H1 (cell line): ENCODE measurements at regions of chr12 and their contacts with region 1.

Region 1: GRCh38 chr12:50167041-50167828 is at the start of gene CERS5:
- DNase-seq: peak; percentile 97
- H3K4me3 ChIP-seq: peak within 1 kb of the TSS; percentile 51 to 91 (median 82)
- H3K27ac ChIP-seq: peak within 1 kb of the TSS; percentile 74
- H3K4me1 ChIP-seq: peaks cover 0 to 2% (median 0%) of the 10 kb centered on the region in 4 experiments; a peak in 2 of 7 replicates
- H3K27me3 ChIP-seq: no peaks in the 10 kb centered on the region
- CTCF ChIP-seq: no peak; a peak in 1 of 4 replicates
- EP300 ChIP-seq: no peak
- POLR2A ChIP-seq: peak; percentile 62 to 88
- RAD21 ChIP-seq: no peak
- total RNA-seq, gene CERS5: 58.5 and 69.2 TPM in 2 replicates

Region 2: DNA sequence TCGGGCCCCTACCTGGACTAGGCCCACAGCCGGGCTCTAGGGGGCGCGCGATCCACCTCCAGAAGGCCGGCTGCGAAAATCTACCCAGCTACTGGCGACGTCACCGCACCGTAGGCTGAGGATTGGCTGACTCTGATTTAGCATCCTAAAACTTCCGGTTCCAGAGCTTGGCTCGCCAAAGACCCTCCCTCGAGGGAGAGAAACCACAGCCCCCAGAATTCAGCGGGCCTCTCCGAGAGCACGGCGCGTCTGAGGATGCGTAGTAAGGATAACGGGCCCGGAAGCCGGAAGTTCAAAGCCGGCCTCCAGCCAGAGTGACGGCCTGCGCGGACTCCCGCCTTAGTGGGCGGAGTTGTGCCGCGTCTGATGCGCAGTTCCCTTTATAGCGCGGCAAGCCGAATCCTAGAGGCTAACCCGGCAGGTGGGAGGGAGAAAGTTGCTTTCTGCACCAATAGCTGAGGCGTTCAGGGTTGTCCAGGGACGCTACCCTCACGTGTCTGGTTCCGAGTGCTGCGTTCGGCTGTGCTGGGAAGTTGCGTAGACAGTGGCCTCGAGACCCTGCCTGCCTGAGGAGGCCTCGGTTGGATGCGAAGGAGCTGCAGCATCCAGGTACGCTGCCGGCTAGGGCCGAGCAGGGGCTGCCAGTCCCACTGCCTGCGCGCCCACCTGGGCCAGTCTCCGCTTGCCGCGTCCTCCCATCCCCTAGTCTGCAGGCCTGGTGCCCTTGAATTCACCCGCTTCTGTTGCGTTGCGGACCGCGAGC is 55.4 kb before region 1 on chr12 and contains the start of gene COX14:
- CTCF ChIA-PET with region 1: interaction called, 135 read pairs
- POLR2A ChIA-PET with region 1: interaction called, 33 read pairs
- DNase-seq: peak; percentile 99 to 100
- H3K4me3 ChIP-seq: peak within 1 kb of the TSS; percentile 67 to 96 (median 88)
- H3K27ac ChIP-seq: peak within 1 kb of the TSS; percentile 74
- H3K4me1 ChIP-seq: peaks cover 10 to 15% (median 12%) of the 10 kb centered on the region in 4 experiments
- H3K27me3 ChIP-seq: no peaks in the 10 kb centered on the region
- CTCF ChIP-seq: peak; percentile 81 to 93 (median 81)
- EP300 ChIP-seq: 0 out of 3 replicates have a peak, but pooled peaks of 1 of the 2 experiments have one; percentile 37
- POLR2A ChIP-seq: peak in 1 of 2 experiments; percentile 93; a peak in 2 of 3 replicates
- RAD21 ChIP-seq: peak; percentile 52 to 55
- total RNA-seq, gene COX14: 38.5 and 40.1 TPM in 2 replicates

Region 3: GRCh38 chr12:50132505-50133135 is 34.6 kb before region 1 on chr12:
- CTCF ChIA-PET with region 1: interaction called, 10 read pairs
- POLR2A ChIA-PET with region 1: interaction called, 15 read pairs
- DNase-seq: no peak
- H3K4me3 ChIP-seq: no peak overlapping the region
- H3K27ac ChIP-seq: no peak overlapping the region
- H3K4me1 ChIP-seq: no peaks in the 10 kb centered on the region
- H3K27me3 ChIP-seq: no peaks in the 10 kb centered on the region
- CTCF ChIP-seq: peak in 2 of 3 experiments; percentile 33 to 38; a peak in 2 of 4 replicates
- EP300 ChIP-seq: no peak
- POLR2A ChIP-seq: no peak
- RAD21 ChIP-seq: peak; percentile 49 to 56; a peak in 3 of 4 replicates

Region 4: DNA sequence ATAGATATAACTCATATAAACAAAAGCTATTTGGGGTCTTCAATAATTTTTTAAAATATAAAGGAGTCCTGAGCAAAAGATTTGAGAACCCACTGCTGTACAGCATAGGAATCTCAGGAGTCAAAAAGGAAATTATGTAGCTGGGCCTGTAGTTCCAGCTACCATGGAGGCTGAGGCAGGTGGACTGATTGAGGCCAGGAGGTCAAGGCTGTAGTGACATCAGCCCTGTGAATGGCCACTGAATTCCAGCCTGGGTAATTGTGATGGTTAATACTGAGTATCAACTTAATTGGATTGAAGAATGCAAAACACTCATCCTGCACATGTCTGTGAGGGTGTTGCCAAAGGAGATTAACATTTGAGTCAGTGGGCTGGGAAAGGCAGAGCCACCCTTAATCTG is 10.6 kb before region 1 on chr12:
- CTCF ChIA-PET with region 1: interaction called, 5 read pairs
- POLR2A ChIA-PET with region 1: interaction called, 20 read pairs
- DNase-seq: no peak
- H3K4me3 ChIP-seq: no peak overlapping the region
- H3K27ac ChIP-seq: no peak overlapping the region
- H3K4me1 ChIP-seq: no peaks in the 10 kb centered on the region
- H3K27me3 ChIP-seq: no peaks in the 10 kb centered on the region
- CTCF ChIP-seq: no peak
- EP300 ChIP-seq: no peak
- POLR2A ChIP-seq: no peak
- RAD21 ChIP-seq: no peak

Region 5: DNA sequence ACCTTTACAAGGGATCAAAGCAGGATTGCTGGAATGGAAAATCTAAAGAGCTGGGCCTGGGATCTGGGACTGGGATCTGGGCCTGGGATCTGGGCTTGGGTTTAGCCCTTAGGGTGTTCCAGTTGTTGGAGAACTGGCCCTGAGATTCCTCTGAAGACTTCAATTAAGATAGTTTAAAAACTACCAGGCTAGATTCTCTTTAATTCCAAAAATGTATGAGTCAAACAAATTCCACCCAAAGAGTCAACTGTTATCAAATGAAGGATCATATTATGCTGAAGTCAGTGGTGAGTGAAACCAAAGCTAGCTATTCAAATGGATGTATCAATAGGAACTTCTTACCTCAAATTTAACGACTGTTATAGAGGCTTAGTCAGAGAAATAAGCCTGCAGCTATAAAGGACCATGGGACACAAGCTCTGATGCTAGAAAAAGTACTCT is 75.5 kb after region 1 on chr12:
- CTCF ChIA-PET with region 1: no interaction called
- POLR2A ChIA-PET with region 1: no interaction called
- DNase-seq: no peak
- H3K4me3 ChIP-seq: no peak overlapping the region
- H3K27ac ChIP-seq: no peak overlapping the region
- H3K4me1 ChIP-seq: no peaks in the 10 kb centered on the region
- H3K27me3 ChIP-seq: no peaks in the 10 kb centered on the region
- CTCF ChIP-seq: no peak
- EP300 ChIP-seq: no peak
- POLR2A ChIP-seq: no peak
- RAD21 ChIP-seq: no peak

Region 6: GRCh38 chr12:50751948-50752721 is 584.9 kb after region 1 on chr12:
- CTCF ChIA-PET with region 1: no interaction called
- POLR2A ChIA-PET with region 1: no interaction called
- DNase-seq: no peak
- H3K4me3 ChIP-seq: no peak overlapping the region
- H3K27ac ChIP-seq: no peak overlapping the region
- H3K4me1 ChIP-seq: no peaks in the 10 kb centered on the region
- H3K27me3 ChIP-seq: no peaks in the 10 kb centered on the region
- CTCF ChIP-seq: no peak
- EP300 ChIP-seq: no peak
- POLR2A ChIP-seq: no peak
- RAD21 ChIP-seq: no peak